PC-3 (cell line): ENCODE measurements at regions of chr10 and their contacts with region 1.

Region 1: GRCh38 chr10:89327784-89328441 is at the start of gene IFIT3:
- DNase-seq: peak; percentile 80
- ATAC-seq: peak; percentile 78
- H3K4me3 ChIP-seq: peak within 1 kb of the TSS; percentile 75
- H3K27ac ChIP-seq: peak within 1 kb of the TSS; percentile 94
- H3K4me1 ChIP-seq: peaks cover 45% of the 10 kb centered on the region
- H3K27me3 ChIP-seq: no peaks in the 10 kb centered on the region
- CTCF ChIP-seq: no peak
- total RNA-seq, gene IFIT3: 5.0 and 7.1 TPM in 2 replicates

Region 2: GRCh38 chr10:89224739-89225443 is 103.0 kb before region 1 on chr10:
- CTCF ChIA-PET with region 1: no interaction called
- POLR2A ChIA-PET with region 1: no interaction called
- intact Hi-C with region 1: no loop called
- DNase-seq: no peak
- ATAC-seq: no peak
- H3K4me3 ChIP-seq: no peak overlapping the region
- H3K27ac ChIP-seq: no peak overlapping the region
- H3K4me1 ChIP-seq: no peaks in the 10 kb centered on the region
- H3K27me3 ChIP-seq: no peaks in the 10 kb centered on the region
- CTCF ChIP-seq: no peak

Region 3: GRCh38 chr10:89301721-89302445 is 26.0 kb before region 1 on chr10 and contains the start of gene IFIT2:
- CTCF ChIA-PET with region 1: no interaction called
- POLR2A ChIA-PET with region 1: interaction called, 11 read pairs
- intact Hi-C with region 1: no loop called
- DNase-seq: peak; percentile 71
- ATAC-seq: peak; percentile 67
- H3K4me3 ChIP-seq: peak within 1 kb of the TSS; percentile 66
- H3K27ac ChIP-seq: peak within 1 kb of the TSS; percentile 79
- H3K4me1 ChIP-seq: peaks cover 30% of the 10 kb centered on the region
- H3K27me3 ChIP-seq: no peaks in the 10 kb centered on the region
- CTCF ChIP-seq: no peak
- total RNA-seq, gene IFIT2: 6.9 and 8.6 TPM in 2 replicates

Region 4: DNA sequence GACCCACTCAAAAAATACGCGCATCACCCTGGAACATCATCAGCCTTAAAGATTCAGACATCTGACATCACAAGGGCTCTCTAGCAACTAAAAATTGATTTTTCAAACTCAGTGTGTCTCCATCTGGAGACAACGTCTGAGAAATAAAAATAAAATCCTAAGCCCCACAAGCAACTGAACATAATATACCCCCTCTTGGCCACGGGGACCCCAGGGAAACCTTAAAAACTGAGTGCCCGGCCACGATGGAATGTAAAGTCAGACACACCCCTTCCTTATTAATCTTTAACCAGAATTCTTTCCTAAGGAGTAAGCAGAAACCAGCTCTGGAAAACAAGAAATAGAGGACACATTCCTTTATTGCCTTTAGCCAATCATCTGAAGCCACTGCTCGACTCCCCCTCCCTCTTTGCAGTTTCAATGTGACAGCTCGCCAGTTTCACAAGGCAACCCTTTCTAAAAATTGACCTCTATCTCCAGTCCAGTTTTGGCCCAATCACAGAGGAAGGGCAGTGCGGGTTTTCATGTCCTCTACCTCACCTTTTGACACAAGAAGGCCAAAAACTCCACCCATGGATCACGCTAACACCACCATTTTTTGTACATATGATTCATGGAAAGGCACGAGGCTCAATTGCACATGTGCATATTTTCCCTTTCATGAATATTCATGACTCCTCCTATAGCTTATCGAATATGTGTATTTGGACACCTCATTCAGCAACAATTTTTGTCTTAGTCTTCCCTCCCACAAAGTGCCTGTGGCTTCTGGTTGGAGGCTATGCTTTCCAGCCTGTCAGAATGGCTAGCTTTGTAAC is 24.1 kb after region 1 on chr10:
- CTCF ChIA-PET with region 1: no interaction called
- POLR2A ChIA-PET with region 1: interaction called, 15 read pairs
- intact Hi-C with region 1: loop called (anchors 2 kb)
- DNase-seq: peak; percentile 92
- ATAC-seq: peak; percentile 77
- H3K4me3 ChIP-seq: peak overlapping the region; percentile 25; the same call in 1 of the 2 replicates
- H3K27ac ChIP-seq: peak overlapping the region; percentile 87
- H3K4me1 ChIP-seq: peaks cover 43% of the 10 kb centered on the region
- H3K27me3 ChIP-seq: no peaks in the 10 kb centered on the region
- CTCF ChIP-seq: no peak

Region 5: GRCh38 chr10:89369156-89370105 is 41.5 kb after region 1 on chr10:
- CTCF ChIA-PET with region 1: no interaction called
- POLR2A ChIA-PET with region 1: no interaction called
- intact Hi-C with region 1: loop called (anchors 5 kb)
- DNase-seq: peak; percentile 59
- ATAC-seq: peak; percentile 39
- H3K4me3 ChIP-seq: no peak overlapping the region
- H3K27ac ChIP-seq: peak overlapping the region; percentile 13; the same call in 1 of the 2 replicates
- H3K4me1 ChIP-seq: peaks cover 34% of the 10 kb centered on the region
- H3K27me3 ChIP-seq: no peaks in the 10 kb centered on the region
- CTCF ChIP-seq: peak; percentile 80